ENCODE measurements at regions of chr1 and their contacts with region 1.

Region 1: GRCh38 chr1:235527196-235527814 is 23.1 kb upstream of the B3GALNT2 start:
- DNase-seq: no peak
- H3K4me3 ChIP-seq: no peak overlapping the region
- H3K27ac ChIP-seq: no peak overlapping the region
- H3K4me1 ChIP-seq: no peaks in the 10 kb centered on the region
- H3K27me3 ChIP-seq: no peaks in the 10 kb centered on the region
- CTCF ChIP-seq: no peak

Region 2: GRCh38 chr1:235648954-235649367 is 121.7 kb after region 1 on chr1:
- intact Hi-C with region 1: loop called (anchors 10 kb)
- DNase-seq: peak in 1 of 2 donors; percentile 41
- H3K4me3 ChIP-seq: peak overlapping the region; percentile 42 to 58
- H3K27ac ChIP-seq: no peak overlapping the region
- H3K4me1 ChIP-seq: peaks cover 0 to 32% (median 27%) of the 10 kb centered on the region in 4 donors
- H3K27me3 ChIP-seq: peaks cover 3 to 86% of the 10 kb centered on the region in 2 donors
- CTCF ChIP-seq: no peak

Measured in tibial artery (tissue), 4 donors.